ENCODE measurements at regions of chr1 and their contacts with region 1.

Region 1: DNA sequence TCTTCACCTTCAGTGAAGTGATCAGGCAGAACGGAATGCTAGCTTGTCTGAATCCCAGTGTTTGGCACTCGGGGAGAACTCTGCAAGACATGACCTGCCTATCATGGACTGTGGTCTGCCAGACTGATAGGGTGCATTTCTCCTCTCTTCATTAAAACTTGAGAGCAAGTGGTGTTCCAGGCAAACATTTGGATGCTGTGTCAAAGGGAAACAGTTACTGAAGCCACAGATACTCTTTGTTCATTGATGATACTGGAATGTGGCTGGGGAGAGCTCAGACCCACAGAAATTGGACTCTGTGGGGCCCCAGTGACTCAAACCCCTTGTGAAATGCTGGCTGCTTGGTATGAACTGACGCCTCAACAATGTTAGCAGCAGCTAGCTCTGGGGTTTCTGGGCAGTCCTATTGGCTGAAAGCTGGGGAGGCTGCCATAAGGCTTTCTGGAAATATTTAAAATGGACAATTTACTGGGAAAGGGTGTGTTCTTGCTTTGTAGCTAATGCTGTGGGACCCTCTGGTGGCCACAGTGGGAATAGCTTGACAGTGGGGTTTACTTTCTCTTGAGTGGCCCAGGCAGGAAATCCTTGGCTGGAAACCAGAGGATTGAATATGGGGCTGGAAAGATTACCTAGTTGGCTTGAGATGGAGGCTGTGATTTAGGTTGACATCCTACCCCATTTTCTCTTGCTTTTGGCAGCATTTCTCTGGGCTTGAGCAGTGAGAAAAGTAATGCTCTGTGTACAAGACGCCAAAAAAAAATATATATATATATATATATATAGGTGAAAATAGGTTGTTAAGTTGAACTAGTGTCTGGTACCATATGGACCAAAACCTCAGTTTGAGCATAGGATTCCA is 8.0 kb upstream of the S100A10 start:
- DNase-seq: peak; percentile 88
- ATAC-seq: peak; percentile 63
- H3K4me3 Mint-ChIP-seq: no peak overlapping the region
- H3K27ac Mint-ChIP-seq: no peak overlapping the region
- H3K4me1 Mint-ChIP-seq: peaks cover 10% of the 10 kb centered on the region
- H3K27me3 Mint-ChIP-seq: peaks cover 35% of the 10 kb centered on the region

Region 2: DNA sequence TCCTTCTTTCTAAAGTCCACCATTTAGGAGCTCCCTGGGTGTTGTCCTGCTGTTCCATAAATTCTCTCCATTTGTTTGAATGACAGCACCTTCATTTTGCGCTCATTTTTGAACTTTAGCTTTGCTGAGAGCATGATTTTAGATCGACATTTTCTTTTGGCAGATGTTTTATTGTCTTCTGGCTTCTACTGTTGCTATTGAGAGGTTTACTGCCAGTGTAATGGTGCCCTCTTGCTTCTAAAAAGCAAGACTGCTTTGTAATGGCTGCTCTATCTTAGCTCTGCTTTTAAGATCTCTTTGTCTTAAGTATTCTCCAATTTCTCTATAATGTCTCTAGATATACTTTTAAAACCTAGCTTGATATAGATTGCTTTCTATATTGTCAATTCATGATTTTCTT is 120.2 kb before region 1 on chr1:
- CTCF ChIA-PET with region 1: interaction called, 15 read pairs
- POLR2A ChIA-PET with region 1: no interaction called
- DNase-seq: no peak
- ATAC-seq: no peak
- H3K4me3 Mint-ChIP-seq: no peak overlapping the region
- H3K27ac Mint-ChIP-seq: no peak overlapping the region
- H3K4me1 Mint-ChIP-seq: no peaks in the 10 kb centered on the region
- H3K27me3 Mint-ChIP-seq: no peaks in the 10 kb centered on the region

Region 3: DNA sequence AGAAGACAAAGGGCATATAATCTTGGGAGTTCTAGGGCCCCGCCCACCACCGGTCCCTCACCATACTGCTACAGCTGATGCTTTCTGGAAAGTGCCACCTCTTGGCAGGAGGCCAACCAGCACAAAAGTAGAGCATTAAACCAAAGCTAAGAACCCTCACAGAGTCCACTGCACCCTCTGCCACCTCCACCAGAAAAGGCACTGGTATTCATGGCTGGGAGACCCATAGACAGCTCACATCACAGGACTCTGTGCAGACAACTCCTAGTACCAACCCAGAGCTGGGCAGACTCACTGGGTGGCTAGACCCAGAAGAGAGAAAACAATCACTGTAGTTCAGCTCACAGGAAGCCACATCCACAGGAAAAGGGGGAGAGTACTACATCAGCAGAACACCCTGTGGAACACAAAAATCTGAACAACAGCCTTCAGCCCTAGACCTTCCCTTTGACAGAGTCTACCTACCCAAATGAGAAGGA is 103.1 kb before region 1 on chr1:
- CTCF ChIA-PET with region 1: interaction called, 18 read pairs
- POLR2A ChIA-PET with region 1: no interaction called
- DNase-seq: peak; percentile 70
- ATAC-seq: peak; percentile 88
- H3K4me3 Mint-ChIP-seq: peak overlapping the region; percentile 62
- H3K27ac Mint-ChIP-seq: peak overlapping the region; percentile 90
- H3K4me1 Mint-ChIP-seq: peaks cover 58% of the 10 kb centered on the region
- H3K27me3 Mint-ChIP-seq: no peaks in the 10 kb centered on the region

Region 4: DNA sequence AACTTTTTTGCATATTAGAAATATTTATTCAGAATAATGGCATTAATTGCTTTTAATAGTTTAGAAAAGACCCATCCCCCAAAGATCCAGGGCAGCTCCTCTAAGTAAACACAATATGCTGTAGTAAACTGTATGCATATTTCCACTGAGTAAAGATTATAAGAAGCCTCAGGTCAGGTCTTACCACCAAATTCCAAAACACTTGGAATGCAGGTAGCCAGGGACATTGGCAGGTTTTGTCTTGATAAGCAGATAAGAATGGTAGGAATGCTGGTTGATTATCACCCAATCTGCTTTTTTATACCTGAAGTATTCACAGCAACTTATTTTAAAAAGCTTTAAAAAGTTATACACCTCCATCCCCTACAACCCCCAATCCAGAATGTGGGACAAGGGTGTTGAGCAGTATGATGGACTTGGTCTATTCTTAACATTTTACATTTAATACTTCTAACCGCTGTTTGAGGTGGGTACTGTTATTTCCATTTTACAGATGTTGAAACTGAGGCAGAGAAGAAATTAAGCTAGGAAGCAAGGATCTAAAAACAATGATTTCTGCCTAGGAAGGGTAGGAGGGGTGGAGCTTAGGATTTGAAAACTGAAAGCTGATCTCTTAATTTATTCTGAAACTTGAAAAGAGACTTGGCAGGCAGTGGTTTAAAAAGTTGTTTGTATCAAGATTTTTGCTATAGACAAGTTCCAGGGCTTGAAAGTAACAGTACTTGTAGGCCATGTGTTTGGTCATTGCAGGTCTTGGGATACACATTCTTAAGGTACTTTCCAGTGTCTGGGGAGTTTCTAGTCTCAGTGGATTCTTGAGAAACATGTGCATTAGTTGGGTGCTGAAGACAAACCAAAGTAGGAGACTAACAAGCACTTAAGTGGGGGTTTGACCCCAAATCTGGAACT is 76.7 kb before region 1 on chr1:
- CTCF ChIA-PET with region 1: interaction called, 256 read pairs
- POLR2A ChIA-PET with region 1: no interaction called
- DNase-seq: no peak
- ATAC-seq: peak; percentile 63
- H3K4me3 Mint-ChIP-seq: no peak overlapping the region
- H3K27ac Mint-ChIP-seq: peak overlapping the region; percentile 9
- H3K4me1 Mint-ChIP-seq: peaks cover 22% of the 10 kb centered on the region
- H3K27me3 Mint-ChIP-seq: no peaks in the 10 kb centered on the region

Region 5: DNA sequence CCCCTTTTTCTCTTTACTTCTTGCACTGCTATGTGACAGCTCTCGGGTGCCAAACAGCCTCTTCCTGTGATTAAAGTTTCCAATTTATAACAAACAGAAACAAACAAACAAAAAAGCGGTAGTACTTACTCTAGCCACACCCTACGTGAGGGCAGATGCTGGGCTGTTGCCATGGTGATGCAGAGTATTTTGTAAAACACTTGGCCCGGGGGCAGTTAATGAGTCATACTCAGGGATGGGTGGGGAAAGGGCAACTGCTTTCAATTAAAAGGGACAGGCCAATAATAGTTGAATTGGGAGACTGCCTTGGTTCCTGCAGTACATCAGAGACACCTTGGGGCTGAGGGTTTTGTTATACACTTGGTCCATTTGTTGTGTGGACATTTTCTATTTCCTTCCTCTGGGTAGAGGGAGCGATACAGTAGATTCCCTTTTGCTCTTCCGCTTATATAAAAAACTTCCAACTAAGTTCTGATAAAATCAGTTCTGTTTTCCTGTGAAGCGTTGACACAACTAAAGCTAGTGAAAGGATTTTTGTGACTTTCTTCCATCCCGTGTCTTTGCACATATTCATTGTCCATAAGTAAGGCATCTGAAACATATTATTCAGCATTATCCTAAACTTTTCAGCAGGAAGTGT is 55.8 kb before region 1 on chr1:
- CTCF ChIA-PET with region 1: interaction called, 256 read pairs
- POLR2A ChIA-PET with region 1: no interaction called
- DNase-seq: peak; percentile 82
- ATAC-seq: peak; percentile 81
- H3K4me3 Mint-ChIP-seq: peak overlapping the region; percentile 40
- H3K27ac Mint-ChIP-seq: peak overlapping the region; percentile 73
- H3K4me1 Mint-ChIP-seq: peaks cover 29% of the 10 kb centered on the region
- H3K27me3 Mint-ChIP-seq: peaks cover 6% of the 10 kb centered on the region

Region 6: DNA sequence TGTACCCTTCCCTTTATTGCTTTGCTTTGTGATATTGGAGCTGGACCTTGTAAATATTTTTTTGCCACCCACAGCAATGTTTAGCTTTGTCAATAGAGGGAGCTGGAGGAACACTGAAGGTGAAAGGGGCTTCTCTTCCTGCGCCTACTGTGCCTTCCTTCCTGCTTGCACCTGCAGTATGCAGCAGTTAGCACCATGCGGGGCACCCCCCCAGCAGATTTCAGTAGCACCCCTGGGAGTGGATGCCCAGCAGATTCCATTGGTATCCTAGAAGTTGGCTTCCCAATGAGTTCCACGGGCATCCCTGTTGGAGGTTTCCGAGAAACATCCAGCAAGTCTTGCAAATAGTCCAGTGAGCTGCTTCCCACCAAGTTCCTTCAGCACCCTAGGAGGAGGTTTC is 33.6 kb before region 1 on chr1:
- CTCF ChIA-PET with region 1: interaction called, 1,011 read pairs
- POLR2A ChIA-PET with region 1: interaction called, 5 read pairs
- DNase-seq: peak; percentile 80
- ATAC-seq: peak; percentile 97
- H3K4me3 Mint-ChIP-seq: no peak overlapping the region
- H3K27ac Mint-ChIP-seq: peak overlapping the region; percentile 22
- H3K4me1 Mint-ChIP-seq: peaks cover 23% of the 10 kb centered on the region
- H3K27me3 Mint-ChIP-seq: peaks cover 7% of the 10 kb centered on the region

Region 7: DNA sequence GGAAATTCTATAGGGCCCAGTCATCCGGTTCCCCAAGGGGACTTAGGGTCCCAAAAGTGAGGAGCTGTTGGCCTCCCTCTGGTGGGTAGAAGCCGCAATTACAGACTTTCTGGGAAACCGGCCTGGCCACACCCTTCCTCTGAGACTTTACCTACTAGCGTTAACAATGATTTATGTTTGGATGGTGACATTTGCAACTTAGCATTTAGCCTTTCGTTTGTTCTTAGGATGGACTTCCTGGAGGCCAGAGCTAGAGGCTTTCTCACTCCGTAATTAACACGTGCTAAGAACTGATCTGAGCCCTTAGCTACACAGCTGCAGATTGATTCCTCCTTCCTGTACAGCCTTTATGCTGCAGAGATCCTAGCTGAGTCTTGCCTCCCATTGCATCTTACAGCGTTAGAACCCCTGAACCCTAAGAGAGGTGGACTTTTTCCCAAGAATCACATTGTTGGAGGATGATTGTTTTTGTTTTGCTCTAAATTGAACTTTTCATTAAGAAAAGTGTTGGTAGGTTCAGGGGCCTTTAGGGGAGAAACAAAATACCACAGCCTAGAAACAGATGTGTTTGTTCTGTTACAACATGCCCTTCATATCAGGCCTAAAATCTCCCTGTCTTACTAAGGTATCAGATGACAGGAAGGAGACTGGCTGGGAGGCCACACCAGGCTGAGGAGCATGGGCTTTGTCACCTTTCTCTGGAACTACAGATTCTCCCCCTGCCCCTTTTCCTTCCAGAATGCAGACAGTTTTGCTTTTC is 33.2 kb after region 1 on chr1:
- CTCF ChIA-PET with region 1: interaction called, 52 read pairs
- POLR2A ChIA-PET with region 1: no interaction called
- DNase-seq: peak; percentile 83
- ATAC-seq: peak; percentile 81
- H3K4me3 Mint-ChIP-seq: peak overlapping the region; percentile 98
- H3K27ac Mint-ChIP-seq: peak overlapping the region; percentile 98
- H3K4me1 Mint-ChIP-seq: peaks cover 43% of the 10 kb centered on the region
- H3K27me3 Mint-ChIP-seq: no peaks in the 10 kb centered on the region

Measured in activated CD8-positive, alpha-beta T cell treated with anti-CD3 and anti-CD28 coated beads, Interleukin-2, amount 10 ng/mL, durations not matched to agents 7 days and 5 days (primary cell).